Right cardiac atrium (tissue), 5 donors: ENCODE measurements at regions of chrX and their contacts with region 1.

Region 1: DNA sequence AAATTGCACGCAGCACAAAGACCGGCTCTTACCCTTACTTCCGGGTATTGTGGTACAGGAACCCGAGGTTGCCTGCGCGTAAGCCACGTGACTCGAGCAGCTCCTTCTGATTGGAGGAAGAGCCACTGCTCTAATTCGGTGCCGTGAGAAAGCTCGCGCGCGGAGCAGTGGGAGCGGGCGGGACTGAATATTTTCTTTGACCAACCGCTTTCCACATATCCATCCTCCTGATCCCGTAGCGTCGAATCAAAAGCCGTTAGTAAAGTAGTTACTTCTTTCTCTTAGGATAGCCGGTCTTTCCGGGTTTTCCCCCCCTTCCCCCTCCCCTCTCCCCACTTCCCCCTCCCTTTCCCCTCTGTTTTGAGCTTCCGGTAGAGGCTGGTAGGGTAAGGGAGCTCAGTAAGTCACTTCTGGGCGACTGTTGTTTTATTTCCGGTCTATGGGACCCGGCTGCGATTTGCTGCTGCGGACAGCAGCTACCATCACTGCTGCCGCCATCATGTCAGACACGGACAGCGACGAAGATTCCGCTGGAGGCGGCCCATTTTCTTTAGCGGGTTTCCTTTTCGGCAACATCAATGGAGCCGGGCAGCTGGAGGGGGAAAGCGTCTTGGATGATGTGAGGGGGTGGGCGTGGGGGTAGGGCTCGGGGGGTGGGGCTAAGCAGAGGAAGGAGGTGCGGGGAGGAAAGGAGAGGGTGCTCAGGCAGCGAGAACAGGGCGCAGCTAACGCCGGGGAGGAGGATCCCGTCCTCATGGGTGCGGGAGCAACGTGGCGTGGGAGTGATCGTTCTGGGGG is at the start of gene TAF1:
- DNase-seq: peak; percentile 94 to 97 (median 96)
- ATAC-seq: peak; percentile 94 to 97
- H3K4me3 ChIP-seq: peak within 1 kb of the TSS; percentile 88
- H3K27ac ChIP-seq: peak within 1 kb of the TSS; percentile 98
- H3K4me1 ChIP-seq: no peaks in the 10 kb centered on the region
- H3K27me3 ChIP-seq: no peaks in the 10 kb centered on the region
- total RNA-seq, gene TAF1: 21.2 to 22.8 (median 22.1) TPM

Region 2: GRCh38 chrX:71254092-71254941 is 111.8 kb before region 1 on chrX and contains the start of gene ZMYM3:
- intact Hi-C with region 1: loop called in 1 of 4 experiments (anchors 10 kb)
- DNase-seq: peak; percentile 88 to 95 (median 95)
- ATAC-seq: peak; percentile 96 to 97
- H3K4me3 ChIP-seq: peak within 1 kb of the TSS; percentile 83
- H3K27ac ChIP-seq: peak within 1 kb of the TSS; percentile 96
- H3K4me1 ChIP-seq: peaks cover 3% of the 10 kb centered on the region
- H3K27me3 ChIP-seq: no peaks in the 10 kb centered on the region
- total RNA-seq, gene ZMYM3: 13.0 to 24.2 (median 18.4) TPM

Region 3: DNA sequence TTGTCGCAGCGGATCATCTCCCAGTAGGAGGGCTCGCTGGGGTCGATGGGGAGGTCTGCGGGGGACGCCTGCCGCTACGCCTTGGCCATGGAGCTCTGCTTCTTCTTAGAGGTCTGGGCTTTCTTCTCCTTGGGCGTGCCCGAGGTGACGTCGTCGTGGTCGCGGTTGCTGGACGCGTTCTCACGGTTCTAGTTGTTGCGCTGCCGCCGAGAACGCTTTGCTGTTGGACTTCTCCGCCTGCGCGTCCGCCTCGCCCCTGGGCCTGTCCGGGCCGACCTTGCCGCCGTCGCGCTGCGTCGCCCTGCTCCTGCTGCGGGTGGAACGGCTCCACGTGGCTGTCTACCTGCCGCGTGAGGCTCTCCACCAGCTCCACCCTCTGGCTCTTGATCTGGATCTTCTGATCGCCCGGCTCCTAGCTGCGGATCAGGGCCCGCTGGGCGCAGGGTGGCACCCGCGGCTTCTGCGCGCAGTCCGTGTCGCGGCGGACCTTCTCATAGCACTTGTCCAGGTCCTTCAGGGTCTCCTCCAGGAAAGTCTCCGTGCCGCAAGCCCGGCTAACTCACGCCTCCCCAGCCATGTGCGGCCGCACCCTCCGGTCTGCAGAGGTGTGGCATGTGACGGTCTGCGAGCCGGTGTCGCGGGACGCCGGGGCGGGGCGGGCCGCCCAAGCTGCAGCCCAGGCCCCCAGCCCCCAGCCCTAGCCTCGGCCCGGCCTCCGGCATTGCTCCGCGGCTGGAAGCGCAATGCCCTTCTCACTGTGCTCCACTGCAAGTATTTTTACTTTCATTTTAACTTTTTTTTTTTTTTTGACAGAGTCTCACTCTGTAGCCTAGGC is 126.4 kb after region 1 on chrX:
- intact Hi-C with region 1: no loop called
- DNase-seq: peak; percentile 54 to 84 (median 83)
- ATAC-seq: peak; percentile 86 to 88
- H3K4me3 ChIP-seq: peak overlapping the region; percentile 58
- H3K27ac ChIP-seq: no peak overlapping the region
- H3K4me1 ChIP-seq: no peaks in the 10 kb centered on the region
- H3K27me3 ChIP-seq: no peaks in the 10 kb centered on the region